Astrocyte of the cerebellum (primary cell): ENCODE measurements at regions of chrX and their contacts with region 1.

Region 1: DNA sequence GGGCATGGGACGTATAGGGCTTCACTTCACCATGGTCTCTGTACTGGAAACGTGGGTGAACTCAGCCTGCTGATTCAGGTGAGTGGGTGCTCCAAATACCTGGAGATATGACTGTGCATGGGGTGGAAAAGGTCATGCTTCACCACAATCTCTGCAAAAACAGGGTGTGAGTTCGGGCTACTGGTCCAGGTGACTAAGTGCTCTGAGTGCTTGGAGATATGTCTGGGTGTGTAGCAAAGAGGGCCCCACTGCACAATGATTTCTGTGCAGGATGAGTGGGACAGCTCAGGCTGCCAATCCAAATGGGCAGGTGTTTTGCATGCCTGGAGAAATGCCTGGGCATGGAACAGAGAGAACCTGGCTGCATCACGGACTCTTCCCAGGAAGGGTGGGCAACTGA is 11.2 kb upstream of the CPXCR1 start:
- DNase-seq: no peak
- H3K4me3 ChIP-seq: no peak overlapping the region
- CTCF ChIP-seq: no peak

Region 2: DNA sequence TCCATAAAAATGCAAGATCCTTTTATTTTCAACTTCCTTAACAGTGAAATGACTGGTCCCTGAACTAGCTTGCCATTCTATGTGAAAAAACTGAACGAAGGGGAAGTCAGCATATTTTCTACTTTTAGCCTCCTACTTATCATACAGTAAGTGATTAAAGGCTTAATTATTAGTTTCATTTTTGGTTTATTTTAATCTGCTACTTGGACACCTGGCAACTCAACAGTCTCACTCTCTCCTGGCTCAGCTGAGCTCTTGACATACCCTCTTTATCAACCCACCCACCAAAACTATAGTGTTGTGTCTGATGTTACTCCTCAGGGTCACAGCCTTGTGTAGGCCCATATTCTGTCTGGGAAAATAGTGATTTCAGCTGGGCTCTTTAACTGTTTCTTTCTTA is 75.0 kb before region 1 on chrX:
- in situ Hi-C with region 1: no loop called
- DNase-seq: no peak
- H3K4me3 ChIP-seq: no peak overlapping the region
- CTCF ChIP-seq: no peak

Region 3: DNA sequence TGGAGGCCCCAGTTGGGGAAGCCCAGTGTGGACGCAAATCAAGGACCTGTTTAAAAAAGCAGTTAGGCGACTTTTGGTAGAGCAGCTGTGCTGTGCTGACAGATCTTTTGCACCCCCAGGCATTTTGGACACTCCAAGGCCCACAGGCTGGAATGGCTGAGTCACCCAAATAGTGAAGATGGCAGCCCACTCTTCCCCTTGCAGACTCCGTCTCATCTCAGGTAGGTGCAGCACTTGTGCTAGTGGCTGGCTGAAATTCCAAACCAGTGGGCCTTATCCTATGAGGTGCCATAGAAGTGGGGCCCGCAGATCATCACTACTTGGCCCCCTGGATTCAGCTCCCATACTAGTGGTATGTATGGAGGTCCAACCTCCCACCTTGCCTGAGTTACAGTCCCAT is 54.0 kb after region 1 on chrX:
- in situ Hi-C with region 1: loop called (anchors 5 kb)
- DNase-seq: no peak
- H3K4me3 ChIP-seq: no peak overlapping the region
- CTCF ChIP-seq: no peak